ENCODE measurements at regions of chr12 and their contacts with region 1.

Region 1: DNA sequence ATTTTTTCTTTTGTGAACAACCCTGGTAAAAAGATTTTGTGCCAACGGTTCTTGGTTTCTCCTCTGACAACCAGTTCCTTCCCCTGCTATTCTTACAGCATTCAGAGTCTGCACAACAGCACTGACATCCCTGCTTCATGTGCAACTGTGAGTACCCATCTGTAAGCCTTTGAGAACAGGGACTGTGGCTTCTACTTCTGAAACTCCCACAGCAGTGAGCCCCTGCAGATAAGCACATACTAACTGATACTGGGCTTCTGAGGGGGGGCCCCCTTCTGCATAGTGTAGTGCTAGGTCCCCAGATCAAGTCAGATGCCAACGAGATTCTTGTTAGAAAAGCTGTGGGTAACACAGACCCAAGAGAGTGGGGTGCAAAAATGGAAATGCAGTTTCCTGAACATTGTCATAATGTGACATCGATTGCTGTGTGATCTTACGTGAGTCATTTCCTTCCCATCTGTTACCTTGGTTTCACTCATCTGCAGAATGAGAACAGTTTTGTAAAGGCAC is 11.1 kb upstream of the NINJ2 start:
- DNase-seq: peak; percentile 6 to 90 (median 53)
- ATAC-seq: peak; percentile 89
- H3K4me3 ChIP-seq: peak overlapping the region; percentile 11
- H3K4me3 Mint-ChIP-seq: peak overlapping the region; percentile 80
- H3K27ac ChIP-seq: peak overlapping the region; percentile 52 to 82
- H3K27ac Mint-ChIP-seq: peak overlapping the region; percentile 94
- H3K4me1 ChIP-seq: peaks cover 64% of the 10 kb centered on the region
- H3K4me1 Mint-ChIP-seq: peaks cover 68% of the 10 kb centered on the region
- H3K27me3 ChIP-seq: no peaks in the 10 kb centered on the region
- H3K27me3 Mint-ChIP-seq: no peaks in the 10 kb centered on the region
- CTCF ChIP-seq: no peak

Region 2: DNA sequence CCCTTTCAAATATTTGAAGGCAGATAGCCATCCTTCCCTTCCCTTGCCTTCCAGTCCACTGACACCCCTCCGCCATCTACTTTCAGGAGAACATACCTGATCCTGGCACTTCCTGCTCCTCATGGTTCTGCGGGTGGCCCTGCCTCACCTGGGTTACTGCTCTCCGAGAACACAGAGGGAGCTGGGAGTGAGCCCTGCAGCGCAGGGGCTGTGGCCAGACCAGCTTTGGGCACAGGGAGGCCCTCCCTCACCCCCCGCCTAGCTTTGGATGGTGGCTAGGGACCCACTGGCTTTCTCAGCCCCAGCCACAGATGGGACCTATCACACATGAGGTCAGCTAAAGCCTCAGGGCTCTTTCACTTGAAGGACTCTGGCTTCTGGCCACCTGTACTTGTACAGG is 595.3 kb before region 1 on chr12:
- CTCF ChIA-PET with region 1: no interaction called
- POLR2A ChIA-PET with region 1: no interaction called
- intact Hi-C with region 1: no loop called
- DNase-seq: no peak
- ATAC-seq: no peak
- H3K4me3 ChIP-seq: no peak overlapping the region
- H3K4me3 Mint-ChIP-seq: no peak overlapping the region
- H3K27ac ChIP-seq: no peak overlapping the region
- H3K27ac Mint-ChIP-seq: no peak overlapping the region
- H3K4me1 ChIP-seq: no peaks in the 10 kb centered on the region
- H3K4me1 Mint-ChIP-seq: peaks cover 5% of the 10 kb centered on the region
- H3K27me3 ChIP-seq: peaks cover 24 to 40% of the 10 kb centered on the region in 2 experiments
- H3K27me3 Mint-ChIP-seq: peaks cover 65% of the 10 kb centered on the region
- CTCF ChIP-seq: no peak

Region 3: DNA sequence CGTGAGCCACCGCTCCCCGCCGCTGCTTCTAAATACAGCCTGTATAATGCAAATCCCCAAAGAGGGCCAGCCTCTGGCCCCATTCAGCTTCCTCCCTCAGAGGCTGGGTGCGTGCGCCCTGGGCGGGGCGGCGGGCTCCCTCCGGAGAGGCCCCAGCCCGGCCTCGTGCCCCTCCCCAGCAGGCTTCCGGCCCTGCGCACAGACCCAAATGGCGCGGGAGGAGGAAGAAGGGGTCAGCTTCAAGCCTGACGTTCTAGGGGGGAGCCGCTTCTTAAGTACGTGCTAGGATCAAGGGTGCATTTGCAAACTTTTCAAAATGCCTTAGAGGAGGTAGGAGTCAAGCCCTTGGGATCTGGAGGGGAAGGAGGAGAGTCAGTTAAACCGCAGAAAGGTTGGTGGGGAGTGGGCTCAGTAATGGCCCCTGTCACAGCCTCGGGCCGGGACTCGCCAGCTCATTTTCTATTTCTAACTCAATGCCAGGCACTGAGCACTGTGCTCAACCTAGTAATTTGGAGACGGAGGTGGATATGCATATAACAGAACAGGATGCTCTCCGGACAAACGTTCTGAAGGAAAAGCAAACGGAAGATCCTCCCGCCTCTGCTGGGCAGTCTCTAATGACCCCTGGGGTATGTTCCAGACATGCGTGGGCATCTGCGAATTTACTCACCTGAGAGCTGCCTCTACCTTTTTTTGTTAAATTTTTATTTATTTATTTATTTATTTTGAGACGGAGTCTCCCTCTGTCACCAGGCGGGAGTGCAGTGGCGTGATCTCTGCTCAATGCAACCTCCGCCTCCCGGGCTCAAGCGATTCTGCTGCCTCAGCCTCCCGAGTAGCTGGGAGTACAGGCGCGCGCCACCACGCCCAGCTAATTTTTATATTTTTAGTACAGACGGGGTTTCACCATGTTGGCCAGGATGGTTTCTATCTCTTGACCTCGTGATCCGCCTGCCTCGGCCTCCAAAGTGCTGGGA is 43.4 kb before region 1 on chr12:
- CTCF ChIA-PET with region 1: interaction called, 4 read pairs
- POLR2A ChIA-PET with region 1: interaction called, 10 read pairs
- intact Hi-C with region 1: loop called in 1 of 2 experiments (anchors 5 kb)
- DNase-seq: peak in 13 of 14 experiments; percentile 41 to 85 (median 66)
- ATAC-seq: peak; percentile 95
- H3K4me3 ChIP-seq: no peak overlapping the region
- H3K4me3 Mint-ChIP-seq: peak overlapping the region; percentile 96
- H3K27ac ChIP-seq: peak overlapping the region in 1 of 2 donors; percentile 60
- H3K27ac Mint-ChIP-seq: peak overlapping the region; percentile 98
- H3K4me1 ChIP-seq: peaks cover 37% of the 10 kb centered on the region
- H3K4me1 Mint-ChIP-seq: peaks cover 41% of the 10 kb centered on the region
- H3K27me3 ChIP-seq: no peaks in the 10 kb centered on the region
- H3K27me3 Mint-ChIP-seq: no peaks in the 10 kb centered on the region
- CTCF ChIP-seq: no peak

Region 4: GRCh38 chr12:642633-643474 is 31.5 kb before region 1 on chr12:
- CTCF ChIA-PET with region 1: interaction called, 8 read pairs
- POLR2A ChIA-PET with region 1: interaction called, 9 read pairs
- intact Hi-C with region 1: loop called in 1 of 2 experiments (anchors 2 kb)
- DNase-seq: peak; percentile 49 to 92 (median 76)
- ATAC-seq: peak; percentile 74
- H3K4me3 ChIP-seq: peak overlapping the region; percentile 67
- H3K4me3 Mint-ChIP-seq: peak overlapping the region; percentile 84
- H3K27ac ChIP-seq: peak overlapping the region; percentile 84 to 85
- H3K27ac Mint-ChIP-seq: peak overlapping the region; percentile 93
- H3K4me1 ChIP-seq: peaks cover 63% of the 10 kb centered on the region
- H3K4me1 Mint-ChIP-seq: peaks cover 63% of the 10 kb centered on the region
- H3K27me3 ChIP-seq: no peaks in the 10 kb centered on the region
- H3K27me3 Mint-ChIP-seq: no peaks in the 10 kb centered on the region
- CTCF ChIP-seq: peak; percentile 15

Region 5: DNA sequence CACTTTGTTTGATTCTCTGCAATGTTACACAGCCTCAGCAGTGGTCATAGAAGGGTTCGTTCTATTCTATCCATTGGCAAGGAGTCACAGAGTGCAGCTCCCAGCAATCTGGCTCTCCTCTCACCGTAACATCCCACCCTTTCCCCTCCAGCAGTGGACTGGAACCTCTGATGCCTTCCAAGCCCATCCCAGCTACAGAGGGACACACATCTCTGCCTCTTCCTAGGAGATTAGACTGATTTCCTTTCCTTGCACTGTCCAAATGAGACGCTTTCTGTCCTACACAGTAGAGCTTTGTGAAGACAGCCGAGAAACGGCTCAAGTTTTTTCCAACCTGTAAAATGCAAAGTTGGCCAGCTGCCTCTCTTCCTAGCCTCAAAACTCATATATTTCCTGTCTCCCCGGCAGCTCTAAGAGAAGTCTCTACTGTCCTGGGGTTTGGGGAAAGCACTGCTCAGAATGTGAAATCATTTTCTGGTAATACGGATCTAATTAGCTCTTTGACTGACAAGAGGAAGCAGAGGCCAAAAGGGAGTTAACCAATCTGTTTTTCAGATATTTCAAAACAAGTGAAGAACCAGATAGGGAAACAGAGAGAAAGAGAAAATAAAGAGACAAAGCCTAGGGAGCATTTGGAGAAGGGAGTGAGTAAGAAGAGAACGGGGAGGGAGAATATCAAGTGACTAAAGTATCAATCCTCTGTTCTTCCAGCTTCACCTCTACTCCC is 11.6 kb before region 1 on chr12:
- CTCF ChIA-PET with region 1: interaction called, 5 read pairs
- POLR2A ChIA-PET with region 1: interaction called, 12 read pairs
- intact Hi-C with region 1: no loop called
- DNase-seq: peak in 1 of 14 experiments; percentile 25
- ATAC-seq: no peak
- H3K4me3 ChIP-seq: peak overlapping the region; percentile 1
- H3K4me3 Mint-ChIP-seq: peak overlapping the region; percentile 84
- H3K27ac ChIP-seq: no peak overlapping the region
- H3K27ac Mint-ChIP-seq: peak overlapping the region; percentile 63
- H3K4me1 ChIP-seq: peaks cover 67% of the 10 kb centered on the region
- H3K4me1 Mint-ChIP-seq: peaks cover 62% of the 10 kb centered on the region
- H3K27me3 ChIP-seq: no peaks in the 10 kb centered on the region
- H3K27me3 Mint-ChIP-seq: no peaks in the 10 kb centered on the region
- CTCF ChIP-seq: no peak

Region 6: DNA sequence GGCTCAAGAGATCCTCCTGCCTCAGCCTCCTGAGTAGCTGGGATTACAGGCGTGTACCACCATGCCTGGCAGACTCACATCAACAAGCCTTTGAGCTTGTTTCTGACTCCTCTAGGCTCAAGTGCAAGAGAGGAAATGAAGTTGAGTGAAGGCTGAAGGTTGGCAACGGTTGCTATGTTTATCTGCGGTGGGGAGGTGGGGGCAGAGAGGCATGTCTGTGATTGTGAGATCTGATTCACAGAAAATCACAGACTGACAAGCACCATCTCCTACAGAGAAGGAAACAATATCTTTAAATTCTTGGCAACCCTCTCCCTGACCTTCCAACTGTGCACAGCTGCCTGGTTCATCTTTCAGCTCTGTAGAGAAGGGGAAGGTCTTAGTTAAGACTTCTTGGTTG is 11.1 kb after region 1 on chr12:
- CTCF ChIA-PET with region 1: interaction called, 3 read pairs
- POLR2A ChIA-PET with region 1: interaction called, 33 read pairs
- intact Hi-C with region 1: loop called in 1 of 2 experiments (anchors 1 kb)
- DNase-seq: peak; percentile 70 to 96 (median 78)
- ATAC-seq: peak; percentile 92
- H3K4me3 ChIP-seq: peak overlapping the region; percentile 7
- H3K4me3 Mint-ChIP-seq: peak overlapping the region; percentile 39
- H3K27ac ChIP-seq: peak overlapping the region; percentile 75 to 93
- H3K27ac Mint-ChIP-seq: peak overlapping the region; percentile 91
- H3K4me1 ChIP-seq: peaks cover 27% of the 10 kb centered on the region
- H3K4me1 Mint-ChIP-seq: peaks cover 60% of the 10 kb centered on the region
- H3K27me3 ChIP-seq: no peaks in the 10 kb centered on the region
- H3K27me3 Mint-ChIP-seq: no peaks in the 10 kb centered on the region
- CTCF ChIP-seq: no peak

Region 7: GRCh38 chr12:724194-724855 is 50.0 kb after region 1 on chr12:
- CTCF ChIA-PET with region 1: no interaction called
- POLR2A ChIA-PET with region 1: interaction called, 8 read pairs
- intact Hi-C with region 1: loop called in 1 of 2 experiments (anchors 5 kb)
- DNase-seq: peak in 7 of 14 experiments; percentile 5 to 63 (median 54)
- ATAC-seq: peak; percentile 55
- H3K4me3 ChIP-seq: no peak overlapping the region
- H3K4me3 Mint-ChIP-seq: no peak overlapping the region
- H3K27ac ChIP-seq: no peak overlapping the region
- H3K27ac Mint-ChIP-seq: peak overlapping the region; percentile 87
- H3K4me1 ChIP-seq: peaks cover 47% of the 10 kb centered on the region
- H3K4me1 Mint-ChIP-seq: peaks cover 89% of the 10 kb centered on the region
- H3K27me3 ChIP-seq: no peaks in the 10 kb centered on the region
- H3K27me3 Mint-ChIP-seq: no peaks in the 10 kb centered on the region
- CTCF ChIP-seq: no peak